ENCODE measurements at regions of chr15 and their contacts with region 1.

Region 1: DNA sequence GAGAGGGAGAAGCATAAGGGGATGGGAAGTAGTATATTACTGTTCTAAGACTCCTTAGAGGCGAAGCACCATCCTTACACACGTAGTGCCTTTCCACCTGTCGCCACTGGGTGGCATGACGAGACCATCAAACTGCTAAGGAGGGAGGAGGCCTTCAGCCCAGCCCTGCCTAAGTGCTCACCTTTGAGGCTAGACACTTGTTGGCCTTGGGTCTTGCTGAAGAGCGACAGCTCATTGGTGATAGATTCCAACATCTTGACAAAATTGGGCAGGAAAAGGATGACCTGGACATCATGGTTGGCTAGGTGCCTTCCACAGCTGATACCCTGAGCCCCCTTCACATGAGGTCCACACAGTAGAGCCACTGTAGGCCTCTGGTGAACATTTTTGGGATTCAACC is 19.6 kb downstream of the CLK3 start:
- DNase-seq: peak; percentile 41 to 74 (median 65)
- ATAC-seq: peak; percentile 88
- H3K4me3 ChIP-seq: no peak overlapping the region
- H3K4me3 Mint-ChIP-seq: no peak overlapping the region
- H3K27ac ChIP-seq: no peak overlapping the region
- H3K27ac Mint-ChIP-seq: peak overlapping the region in 2 of 9 donors; percentile 25 to 74
- H3K4me1 ChIP-seq: no peaks in the 10 kb centered on the region
- H3K4me1 Mint-ChIP-seq: peaks cover 0 to 7% (median 0%) of the 10 kb centered on the region in 7 donors
- H3K27me3 ChIP-seq: no peaks in the 10 kb centered on the region
- H3K27me3 Mint-ChIP-seq: no peaks in the 10 kb centered on the region

Region 2: GRCh38 chr15:74620636-74621545 is 14.3 kb before region 1 on chr15:
- CTCF ChIA-PET with region 1: interaction called, 71 read pairs
- POLR2A ChIA-PET with region 1: interaction called, 14 read pairs
- intact Hi-C with region 1: loop called (anchors 1 to 2 kb)
- DNase-seq: peak; percentile 46 to 78 (median 74)
- ATAC-seq: peak; percentile 95
- H3K4me3 ChIP-seq: no peak overlapping the region
- H3K4me3 Mint-ChIP-seq: peak overlapping the region in 8 of 10 donors; percentile 3 to 82 (median 42)
- H3K27ac ChIP-seq: peak overlapping the region; percentile 6
- H3K27ac Mint-ChIP-seq: peak overlapping the region; percentile 9 to 91 (median 76)
- H3K4me1 ChIP-seq: peaks cover 22 to 32% of the 10 kb centered on the region in 2 donors
- H3K4me1 Mint-ChIP-seq: peaks cover 46 to 64% (median 56%) of the 10 kb centered on the region in 7 donors
- H3K27me3 ChIP-seq: no peaks in the 10 kb centered on the region
- H3K27me3 Mint-ChIP-seq: no peaks in the 10 kb centered on the region

Region 3: GRCh38 chr15:74793135-74794028 is 158.2 kb after region 1 on chr15:
- CTCF ChIA-PET with region 1: interaction called, 27 read pairs
- POLR2A ChIA-PET with region 1: interaction called, 3 read pairs
- intact Hi-C with region 1: no loop called
- DNase-seq: peak; percentile 62 to 78 (median 74)
- ATAC-seq: peak; percentile 63
- H3K4me3 ChIP-seq: peak overlapping the region; percentile 25
- H3K4me3 Mint-ChIP-seq: peak overlapping the region; percentile 51 to 97 (median 74)
- H3K27ac ChIP-seq: peak overlapping the region; percentile 92
- H3K27ac Mint-ChIP-seq: peak overlapping the region; percentile 49 to 98 (median 95)
- H3K4me1 ChIP-seq: peaks cover 89 to 98% of the 10 kb centered on the region in 2 donors
- H3K4me1 Mint-ChIP-seq: peaks cover 56 to 93% (median 82%) of the 10 kb centered on the region in 7 donors
- H3K27me3 ChIP-seq: no peaks in the 10 kb centered on the region
- H3K27me3 Mint-ChIP-seq: no peaks in the 10 kb centered on the region

Region 4: DNA sequence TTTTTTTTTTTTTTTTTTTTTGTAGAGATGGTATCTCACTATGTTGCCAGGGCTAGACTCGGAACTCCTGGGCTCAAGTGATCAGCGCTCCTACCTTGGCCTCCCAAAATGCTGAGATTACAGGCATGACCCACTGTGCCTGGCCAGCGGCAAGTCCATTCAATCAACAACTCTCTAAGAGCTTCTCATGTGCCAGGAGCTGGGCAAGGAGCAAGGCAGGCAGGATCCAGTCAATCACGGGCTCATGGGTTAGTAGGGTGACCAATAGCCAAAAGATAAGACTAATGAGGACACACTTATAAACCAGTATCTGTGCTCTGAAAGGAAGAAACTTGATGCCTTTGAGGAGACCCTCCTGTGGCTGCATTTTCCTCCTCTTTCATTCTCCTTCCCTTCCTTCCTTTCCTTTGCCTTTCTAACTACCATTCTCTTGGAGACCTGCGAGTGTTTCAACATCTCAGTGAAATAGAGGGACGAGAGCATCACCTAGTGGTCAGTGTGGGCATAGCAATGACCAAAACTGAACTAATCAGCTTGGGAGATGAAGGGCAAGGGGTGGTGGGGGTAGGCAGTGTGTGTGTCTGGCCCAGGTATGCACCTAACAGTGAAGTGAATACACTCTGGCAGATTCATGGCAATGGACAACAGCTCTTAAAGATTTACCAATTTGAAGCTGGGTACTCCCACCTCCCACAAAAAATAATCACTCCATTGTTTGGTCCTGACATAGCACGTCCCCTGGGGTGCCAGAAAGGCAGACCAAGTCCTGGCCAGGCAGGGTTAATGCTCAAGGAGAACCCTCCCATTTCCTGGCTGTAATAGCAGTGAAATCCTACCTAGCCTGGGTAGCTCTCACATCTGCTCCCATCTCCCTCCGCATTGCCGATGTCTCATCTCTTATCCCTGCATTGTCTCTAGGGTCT is 315.1 kb after region 1 on chr15:
- CTCF ChIA-PET with region 1: interaction called, 37 read pairs
- POLR2A ChIA-PET with region 1: no interaction called
- intact Hi-C with region 1: loop called (anchors 1 kb)
- DNase-seq: peak; percentile 54 to 82 (median 75)
- ATAC-seq: peak; percentile 97
- H3K4me3 ChIP-seq: no peak overlapping the region
- H3K4me3 Mint-ChIP-seq: no peak overlapping the region
- H3K27ac ChIP-seq: no peak overlapping the region
- H3K27ac Mint-ChIP-seq: peak overlapping the region in 2 of 9 donors; percentile 28 to 54
- H3K4me1 ChIP-seq: no peaks in the 10 kb centered on the region
- H3K4me1 Mint-ChIP-seq: peaks cover 4 to 17% (median 10%) of the 10 kb centered on the region in 7 donors
- H3K27me3 ChIP-seq: no peaks in the 10 kb centered on the region
- H3K27me3 Mint-ChIP-seq: peaks cover 0 to 3% (median 0%) of the 10 kb centered on the region in 5 donors